ENCODE measurements at regions of chr2 and their contacts with region 1.

Region 1: DNA sequence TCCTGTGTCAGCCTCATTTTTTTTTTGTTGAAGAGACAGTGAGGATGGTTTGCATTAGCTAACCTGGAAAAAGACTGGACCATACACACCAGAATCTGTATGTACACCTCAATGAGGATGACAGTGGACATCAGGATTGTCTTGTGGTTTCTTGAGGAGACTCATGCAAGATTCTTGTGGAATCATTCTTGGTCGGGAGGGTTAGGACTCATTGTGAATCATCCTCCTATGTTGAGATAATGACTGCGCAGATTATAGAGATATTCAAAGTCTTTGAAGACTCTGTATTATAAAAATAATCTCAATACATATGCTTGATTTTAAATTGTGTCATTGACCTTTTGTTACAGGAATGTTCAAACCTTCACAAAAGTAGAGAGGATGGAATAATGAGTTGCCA is 49.1 kb upstream of the DOCK10 start:
- DNase-seq: no peak
- ATAC-seq: no peak
- H3K4me3 ChIP-seq: no peak overlapping the region
- H3K4me3 Mint-ChIP-seq: no peak overlapping the region
- H3K27ac ChIP-seq: no peak overlapping the region
- H3K27ac Mint-ChIP-seq: no peak overlapping the region
- H3K4me1 ChIP-seq: peaks cover 0 to 4% of the 10 kb centered on the region in 2 donors
- H3K4me1 Mint-ChIP-seq: peaks cover 5 to 17% (median 9%) of the 10 kb centered on the region in 7 donors
- H3K27me3 ChIP-seq: no peaks in the 10 kb centered on the region
- H3K27me3 Mint-ChIP-seq: peaks cover 0 to 39% (median 0%) of the 10 kb centered on the region in 5 donors

Region 2: GRCh38 chr2:225103737-225104141 is 12.4 kb after region 1 on chr2:
- CTCF ChIA-PET with region 1: no interaction called
- POLR2A ChIA-PET with region 1: no interaction called
- intact Hi-C with region 1: loop called in 1 of 2 experiments (anchors 2 kb)
- DNase-seq: no peak
- ATAC-seq: no peak
- H3K4me3 ChIP-seq: no peak overlapping the region
- H3K4me3 Mint-ChIP-seq: no peak overlapping the region
- H3K27ac ChIP-seq: no peak overlapping the region
- H3K27ac Mint-ChIP-seq: no peak overlapping the region
- H3K4me1 ChIP-seq: no peaks in the 10 kb centered on the region
- H3K4me1 Mint-ChIP-seq: no peaks in the 10 kb centered on the region
- H3K27me3 ChIP-seq: no peaks in the 10 kb centered on the region
- H3K27me3 Mint-ChIP-seq: peaks cover 0 to 7% (median 0%) of the 10 kb centered on the region in 5 donors

Measured in naive thymus-derived CD4-positive, alpha-beta T cell (primary cell).